Activated CD4-positive, alpha-beta T cell treated with anti-CD3 and anti-CD28 coated beads for 36 hours (primary cell): ENCODE measurements at regions of chr6 and their contacts with region 1.

Region 1: GRCh38 chr6:16761471-16762267 is 409 bp upstream of the ATXN1 start:
- DNase-seq: peak; percentile 91
- ATAC-seq: peak; percentile 60
- H3K4me3 Mint-ChIP-seq: peak overlapping the region; percentile 91
- H3K27ac Mint-ChIP-seq: peak overlapping the region; percentile 94
- H3K4me1 Mint-ChIP-seq: peaks cover 58% of the 10 kb centered on the region
- H3K27me3 Mint-ChIP-seq: no peaks in the 10 kb centered on the region

Region 2: GRCh38 chr6:16183187-16183664 is 578.4 kb before region 1 on chr6:
- CTCF ChIA-PET with region 1: no interaction called
- POLR2A ChIA-PET with region 1: no interaction called
- intact Hi-C with region 1: no loop called
- DNase-seq: no peak
- ATAC-seq: peak; percentile 48
- H3K4me3 Mint-ChIP-seq: no peak overlapping the region
- H3K27ac Mint-ChIP-seq: no peak overlapping the region
- H3K4me1 Mint-ChIP-seq: peaks cover 21% of the 10 kb centered on the region
- H3K27me3 Mint-ChIP-seq: peaks cover under 1% of the 10 kb centered on the region

Region 3: DNA sequence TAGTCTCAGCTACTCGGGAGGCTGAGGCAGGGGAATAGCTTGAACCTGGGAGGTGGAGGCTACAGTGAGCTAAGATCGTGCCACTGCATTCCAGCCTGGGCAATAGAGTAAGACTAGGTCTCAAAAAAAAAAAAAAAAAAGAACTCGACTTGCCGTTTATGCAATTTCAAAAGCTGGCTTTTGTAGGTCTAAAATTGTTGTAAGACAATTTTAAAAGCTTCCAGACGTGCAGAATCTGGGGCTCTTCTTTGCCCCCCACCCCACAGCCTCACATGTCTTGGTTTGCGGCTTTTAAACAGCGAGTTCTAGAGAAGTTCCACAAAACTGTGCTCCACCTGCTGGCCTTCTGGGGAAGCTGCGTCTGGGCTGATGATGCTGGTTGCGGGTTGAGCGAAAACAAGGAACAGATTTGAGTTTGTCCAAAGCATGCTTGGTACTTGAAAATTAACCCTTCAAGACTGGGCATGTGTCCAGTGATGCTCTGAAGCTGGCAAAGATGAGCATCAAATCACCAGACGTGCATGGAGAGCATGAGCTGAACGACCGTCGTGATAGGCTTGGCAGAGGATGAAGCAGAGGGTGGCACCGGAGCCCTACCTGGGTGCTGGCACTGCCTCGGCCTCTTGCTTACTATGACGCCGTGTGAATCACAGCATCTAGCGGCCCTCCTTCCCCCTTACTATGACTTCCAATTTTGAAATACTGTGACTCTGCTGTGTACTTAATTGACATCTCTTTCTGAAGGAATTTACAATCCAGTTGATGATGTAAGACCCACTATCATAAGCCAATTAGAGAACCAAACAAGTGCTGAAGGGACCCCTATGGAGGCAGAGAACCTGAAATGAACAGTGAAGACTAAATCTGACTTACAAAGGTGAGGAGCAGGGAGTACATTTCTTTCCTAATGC is 351.9 kb before region 1 on chr6:
- CTCF ChIA-PET with region 1: interaction called, 4 read pairs
- POLR2A ChIA-PET with region 1: interaction called, 3 read pairs
- intact Hi-C with region 1: loop called in 1 of 2 experiments (anchors 5 kb)
- DNase-seq: peak; percentile 77
- ATAC-seq: peak; percentile 50
- H3K4me3 Mint-ChIP-seq: no peak overlapping the region
- H3K27ac Mint-ChIP-seq: peak overlapping the region; percentile 30
- H3K4me1 Mint-ChIP-seq: peaks cover 41% of the 10 kb centered on the region
- H3K27me3 Mint-ChIP-seq: no peaks in the 10 kb centered on the region

Region 4: DNA sequence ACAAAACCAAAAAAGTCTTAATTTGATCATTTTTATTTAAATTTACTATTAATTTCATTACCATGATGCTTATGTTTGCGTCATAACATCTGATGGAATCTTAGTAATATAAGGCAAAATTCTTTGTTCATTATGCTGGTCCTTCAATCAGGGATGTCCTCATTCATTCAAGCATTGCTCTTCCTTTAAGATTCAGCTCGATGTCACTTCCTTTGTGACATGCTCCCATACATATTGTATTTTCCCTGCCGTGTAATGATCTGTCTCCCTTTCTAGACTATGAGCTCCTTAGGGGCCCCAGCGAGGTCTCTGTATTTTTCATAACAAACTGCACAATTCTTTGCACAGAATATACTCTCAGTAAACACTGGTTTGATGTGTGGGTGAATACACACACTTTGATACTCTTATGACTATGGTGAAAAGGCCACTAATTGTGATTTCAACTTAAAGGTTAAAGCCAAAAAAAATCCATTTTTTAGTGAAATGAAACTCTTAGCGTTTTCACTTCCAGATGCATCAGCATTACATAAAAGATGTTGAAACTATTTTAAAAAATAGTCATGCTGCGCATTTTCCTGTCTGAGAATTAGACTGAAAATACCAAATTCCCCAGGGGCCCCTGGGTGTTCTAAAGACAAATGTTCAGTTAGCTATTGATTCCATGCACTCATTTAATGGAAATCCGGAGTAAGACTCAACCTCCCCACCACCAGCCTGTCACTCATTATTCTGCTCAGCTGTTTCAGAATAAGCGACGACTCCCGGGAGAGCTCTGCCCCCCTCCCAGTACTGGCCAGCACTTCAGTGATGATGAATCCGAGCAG is 170.1 kb before region 1 on chr6:
- CTCF ChIA-PET with region 1: interaction called, 6 read pairs
- POLR2A ChIA-PET with region 1: interaction called, 3 read pairs
- intact Hi-C with region 1: loop called in 1 of 2 experiments (anchors 2 kb)
- DNase-seq: peak; percentile 61
- ATAC-seq: peak; percentile 87
- H3K4me3 Mint-ChIP-seq: no peak overlapping the region
- H3K27ac Mint-ChIP-seq: peak overlapping the region; percentile 78
- H3K4me1 Mint-ChIP-seq: peaks cover 19% of the 10 kb centered on the region
- H3K27me3 Mint-ChIP-seq: no peaks in the 10 kb centered on the region

Region 5: DNA sequence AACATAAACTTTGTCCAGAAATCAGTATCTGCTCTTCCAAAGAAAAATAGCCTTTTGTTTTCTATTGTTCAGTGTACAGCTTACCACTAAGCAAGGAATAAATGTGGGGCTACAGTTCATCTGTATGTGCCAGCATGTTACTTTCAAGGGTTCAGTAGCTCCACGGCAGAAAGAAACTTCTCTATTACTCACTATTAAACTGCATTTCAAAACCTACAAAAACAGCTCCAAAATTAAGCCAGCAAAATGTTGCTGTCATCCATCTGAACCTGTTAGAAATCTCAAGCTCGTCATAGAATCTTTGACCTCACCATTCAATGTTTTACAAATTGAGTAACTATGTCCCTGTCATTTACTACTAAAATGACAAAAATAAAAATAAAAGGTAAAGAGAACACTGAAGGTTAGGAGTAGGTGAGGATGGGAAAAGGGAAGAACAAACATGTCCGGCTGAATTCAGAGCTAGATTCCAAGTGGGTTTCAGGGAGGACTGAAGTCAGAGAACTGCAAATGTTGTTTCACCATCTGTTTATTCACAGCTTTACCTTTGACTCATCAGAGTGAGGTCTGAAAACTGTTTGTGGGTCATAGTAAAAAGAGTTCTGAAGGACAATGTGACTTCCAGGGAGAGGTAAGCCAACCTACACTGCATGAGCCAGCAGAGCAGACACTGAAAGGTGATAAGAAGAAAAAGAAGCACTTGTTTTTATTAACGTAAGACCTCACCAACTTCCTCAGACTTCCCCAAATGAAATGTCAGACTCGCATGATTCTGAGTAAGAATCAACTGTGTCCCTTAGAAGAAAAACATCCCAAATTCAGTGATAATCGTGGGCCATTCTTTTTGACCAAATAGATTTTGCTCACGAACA is 62.4 kb before region 1 on chr6:
- CTCF ChIA-PET with region 1: interaction called, 34 read pairs
- POLR2A ChIA-PET with region 1: interaction called, 8 read pairs
- intact Hi-C with region 1: loop called in 1 of 2 experiments (anchors 2 kb)
- DNase-seq: peak; percentile 45
- ATAC-seq: peak; percentile 63
- H3K4me3 Mint-ChIP-seq: peak overlapping the region; percentile 69
- H3K27ac Mint-ChIP-seq: peak overlapping the region; percentile 95
- H3K4me1 Mint-ChIP-seq: peaks cover 75% of the 10 kb centered on the region
- H3K27me3 Mint-ChIP-seq: no peaks in the 10 kb centered on the region

Region 6: GRCh38 chr6:16747232-16748024 is 14.2 kb before region 1 on chr6:
- CTCF ChIA-PET with region 1: interaction called, 12 read pairs
- POLR2A ChIA-PET with region 1: interaction called, 7 read pairs
- intact Hi-C with region 1: no loop called
- DNase-seq: no peak
- ATAC-seq: peak; percentile 85
- H3K4me3 Mint-ChIP-seq: no peak overlapping the region
- H3K27ac Mint-ChIP-seq: no peak overlapping the region
- H3K4me1 Mint-ChIP-seq: peaks cover 65% of the 10 kb centered on the region
- H3K27me3 Mint-ChIP-seq: no peaks in the 10 kb centered on the region

Region 7: GRCh38 chr6:16819752-16820151 is 58.1 kb after region 1 on chr6:
- CTCF ChIA-PET with region 1: no interaction called
- POLR2A ChIA-PET with region 1: no interaction called
- intact Hi-C with region 1: no loop called
- DNase-seq: peak; percentile 16
- ATAC-seq: no peak
- H3K4me3 Mint-ChIP-seq: no peak overlapping the region
- H3K27ac Mint-ChIP-seq: no peak overlapping the region
- H3K4me1 Mint-ChIP-seq: peaks cover 2% of the 10 kb centered on the region
- H3K27me3 Mint-ChIP-seq: peaks cover 7% of the 10 kb centered on the region

Region 8: GRCh38 chr6:17706580-17707370 is 945.1 kb after region 1 on chr6 and contains the start of gene NUP153:
- CTCF ChIA-PET with region 1: no interaction called
- POLR2A ChIA-PET with region 1: no interaction called
- intact Hi-C with region 1: loop called in 1 of 2 experiments (anchors 5 kb)
- DNase-seq: peak; percentile 99
- ATAC-seq: peak; percentile 70
- H3K4me3 Mint-ChIP-seq: peak within 1 kb of the TSS; percentile 86
- H3K27ac Mint-ChIP-seq: peak within 1 kb of the TSS; percentile 99
- H3K4me1 Mint-ChIP-seq: peaks cover 27% of the 10 kb centered on the region
- H3K27me3 Mint-ChIP-seq: no peaks in the 10 kb centered on the region
- total RNA-seq, gene NUP153: 81.0 to 99.8 TPM